GM12878 (cell line): ENCODE measurements at regions of chr16 and their contacts with region 1.

Region 1: GRCh38 chr16:21989133-21989532 is 11.8 kb downstream of the PDZD9 start:
- DNase-seq: no peak
- ATAC-seq: no peak
- H3K4me3 ChIP-seq: no peak overlapping the region
- H3K27ac ChIP-seq: no peak overlapping the region
- H3K4me1 ChIP-seq: no peaks in the 10 kb centered on the region
- H3K27me3 ChIP-seq: no peaks in the 10 kb centered on the region
- CTCF ChIP-seq: no peak
- EP300 ChIP-seq: no peak
- POLR2A ChIP-seq: no peak
- RAD21 ChIP-seq: no peak

Region 2: DNA sequence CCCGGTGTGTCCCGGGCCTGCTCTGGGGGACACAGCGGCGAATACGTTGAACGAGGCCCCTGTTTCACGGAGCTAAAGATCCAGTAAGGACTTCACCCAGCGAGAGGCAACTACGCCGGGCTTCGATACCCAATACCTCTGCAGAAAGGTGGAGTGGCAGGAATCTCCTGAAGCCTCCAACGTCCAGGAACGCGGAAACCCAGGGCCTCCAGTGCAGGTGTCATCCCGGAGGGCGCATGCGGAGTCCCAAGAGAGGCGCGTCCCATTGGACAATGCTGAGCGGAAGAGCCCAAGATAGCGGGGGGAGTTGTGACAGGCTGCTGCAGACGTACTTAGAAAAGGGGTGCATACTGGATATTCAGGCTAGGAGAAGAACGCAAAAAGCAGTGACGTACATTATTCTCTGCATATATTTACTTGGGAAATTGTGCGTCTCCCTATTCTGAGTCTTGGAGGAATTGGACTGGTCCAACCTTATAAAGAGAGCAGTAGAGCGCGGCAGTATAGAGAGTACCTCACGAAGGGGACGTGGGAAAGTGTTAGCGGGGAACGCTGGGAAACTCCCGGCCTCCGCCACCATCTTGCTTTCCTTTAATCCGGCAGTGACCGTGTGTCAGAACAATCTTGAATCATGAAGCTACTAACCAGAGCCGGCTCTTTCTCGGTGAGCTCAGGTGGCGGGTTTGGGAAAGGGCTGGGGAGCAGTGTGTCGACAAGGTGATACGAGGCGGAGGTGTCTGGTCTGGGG is 36.2 kb before region 1 on chr16 and contains the start of gene UQCRC2:
- CTCF ChIA-PET with region 1: interaction called, 3 read pairs
- POLR2A ChIA-PET with region 1: no interaction called
- RAD21 ChIA-PET with region 1: no interaction called
- SMC1A ChIA-PET with region 1: interaction called, 12 read pairs
- in situ Hi-C with region 1: no loop called
- intact Hi-C with region 1: no loop called
- DNase-seq: peak; percentile 90
- ATAC-seq: peak; percentile 91
- H3K4me3 ChIP-seq: peak within 1 kb of the TSS; percentile 96
- H3K27ac ChIP-seq: peak within 1 kb of the TSS; percentile 99
- H3K4me1 ChIP-seq: peaks cover 24% of the 10 kb centered on the region
- H3K27me3 ChIP-seq: no peaks in the 10 kb centered on the region
- CTCF ChIP-seq: no peak
- EP300 ChIP-seq: peak; percentile 42 to 54; a peak in 2 of 4 replicates
- POLR2A ChIP-seq: peak; percentile 94
- RAD21 ChIP-seq: no peak
- polyA plus RNA-seq, gene UQCRC2: 256 to 277 TPM

Region 3: DNA sequence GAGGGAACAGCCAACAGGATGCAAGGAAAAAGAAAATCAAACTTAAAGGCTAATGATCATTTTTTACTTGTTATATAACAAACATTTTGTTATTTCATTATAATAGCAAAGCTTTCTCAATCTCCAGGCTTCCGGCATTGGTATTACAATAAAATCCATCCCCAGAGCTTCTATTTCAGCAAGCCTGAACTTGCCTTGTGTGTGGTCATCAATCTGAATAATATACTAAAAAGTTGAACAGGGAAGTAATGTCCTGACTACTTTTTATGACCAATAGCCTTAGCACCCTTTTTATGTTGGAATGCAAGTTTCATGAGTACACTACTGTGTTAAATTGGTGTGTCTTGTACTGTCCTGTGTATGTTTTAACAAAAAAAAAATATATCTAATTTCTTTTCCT is 76.1 kb after region 1 on chr16:
- CTCF ChIA-PET with region 1: no interaction called
- POLR2A ChIA-PET with region 1: no interaction called
- RAD21 ChIA-PET with region 1: no interaction called
- SMC1A ChIA-PET with region 1: no interaction called
- in situ Hi-C with region 1: no loop called
- intact Hi-C with region 1: no loop called
- DNase-seq: no peak
- ATAC-seq: no peak
- H3K4me3 ChIP-seq: no peak overlapping the region
- H3K27ac ChIP-seq: no peak overlapping the region
- H3K4me1 ChIP-seq: no peaks in the 10 kb centered on the region
- H3K27me3 ChIP-seq: no peaks in the 10 kb centered on the region
- CTCF ChIP-seq: no peak
- EP300 ChIP-seq: no peak
- POLR2A ChIP-seq: no peak
- RAD21 ChIP-seq: no peak

Region 4: DNA sequence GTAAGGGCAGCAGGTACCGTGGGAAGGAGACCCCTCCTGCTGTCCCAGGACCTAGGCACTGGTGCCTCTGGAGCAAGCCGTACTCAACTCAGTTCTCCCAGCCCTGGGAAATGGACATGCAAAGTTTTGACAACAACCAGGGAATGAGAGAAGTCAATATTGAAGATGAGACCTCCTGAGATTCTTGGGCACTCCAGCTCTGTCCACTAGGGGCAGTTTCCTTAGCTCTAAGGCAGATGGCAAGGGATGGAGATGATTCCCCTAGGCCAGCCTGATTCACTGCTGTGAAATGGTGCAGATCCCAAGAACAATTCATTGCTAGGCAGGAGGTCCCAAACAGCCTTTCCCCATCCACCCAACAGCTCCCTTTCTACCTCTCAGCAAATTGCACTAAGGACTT is 152.6 kb after region 1 on chr16:
- CTCF ChIA-PET with region 1: no interaction called
- POLR2A ChIA-PET with region 1: no interaction called
- RAD21 ChIA-PET with region 1: no interaction called
- SMC1A ChIA-PET with region 1: no interaction called
- in situ Hi-C with region 1: no loop called
- intact Hi-C with region 1: no loop called
- DNase-seq: no peak
- ATAC-seq: peak; percentile 74
- H3K4me3 ChIP-seq: no peak overlapping the region
- H3K27ac ChIP-seq: no peak overlapping the region
- H3K4me1 ChIP-seq: no peaks in the 10 kb centered on the region
- H3K27me3 ChIP-seq: peaks cover 0 to 3% of the 10 kb centered on the region in 2 experiments; a peak in 2 of 4 replicates
- CTCF ChIP-seq: peak; percentile 11 to 46 (median 32); a peak in 4 of 6 replicates
- EP300 ChIP-seq: no peak
- POLR2A ChIP-seq: no peak
- RAD21 ChIP-seq: no peak